MCF 10A (cell line): ENCODE measurements at regions of chr14 and their contacts with region 1.

Region 1: DNA sequence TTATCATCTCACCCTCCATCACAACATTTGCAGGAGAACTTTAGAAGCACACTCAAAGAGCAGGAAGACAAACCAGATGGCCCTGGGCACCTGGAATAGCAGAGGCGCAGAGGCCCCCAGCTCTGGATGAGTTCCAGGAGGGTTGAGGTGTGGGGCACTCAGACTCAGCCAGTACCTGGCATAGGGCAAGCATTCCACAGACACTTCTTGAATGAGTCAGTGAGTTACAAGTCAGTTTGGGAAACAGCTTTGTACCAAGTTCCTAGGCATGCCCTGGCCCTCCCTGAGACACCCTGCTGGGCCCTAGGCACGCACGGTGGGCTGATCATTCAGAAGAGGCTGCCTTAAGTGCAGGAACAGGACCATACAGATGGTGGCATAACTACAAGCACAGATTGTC is 54.3 kb downstream of the MAP3K9 start:
- DNase-seq: peak; percentile 94
- H3K4me3 Mint-ChIP-seq: no peak overlapping the region
- H3K27ac Mint-ChIP-seq: peak overlapping the region; percentile 89
- H3K4me1 Mint-ChIP-seq: peaks cover 24% of the 10 kb centered on the region
- H3K27me3 Mint-ChIP-seq: no peaks in the 10 kb centered on the region
- CTCF ChIP-seq: no peak

Region 2: GRCh38 chr14:70731447-70732239 is 23.3 kb before region 1 on chr14:
- CTCF ChIA-PET with region 1: no interaction called
- POLR2A ChIA-PET with region 1: no interaction called
- intact Hi-C with region 1: no loop called
- DNase-seq: no peak
- H3K4me3 Mint-ChIP-seq: no peak overlapping the region
- H3K27ac Mint-ChIP-seq: peak overlapping the region; percentile 63
- H3K4me1 Mint-ChIP-seq: no peaks in the 10 kb centered on the region
- H3K27me3 Mint-ChIP-seq: no peaks in the 10 kb centered on the region
- CTCF ChIP-seq: no peak

Region 3: GRCh38 chr14:70771781-70772212 is 16.8 kb after region 1 on chr14:
- CTCF ChIA-PET with region 1: interaction called, 3 read pairs
- POLR2A ChIA-PET with region 1: interaction called, 81 read pairs
- intact Hi-C with region 1: no loop called
- DNase-seq: peak; percentile 40
- H3K4me3 Mint-ChIP-seq: peak overlapping the region; percentile 20
- H3K27ac Mint-ChIP-seq: peak overlapping the region; percentile 76
- H3K4me1 Mint-ChIP-seq: peaks cover 32% of the 10 kb centered on the region
- H3K27me3 Mint-ChIP-seq: no peaks in the 10 kb centered on the region
- CTCF ChIP-seq: no peak

Region 4: DNA sequence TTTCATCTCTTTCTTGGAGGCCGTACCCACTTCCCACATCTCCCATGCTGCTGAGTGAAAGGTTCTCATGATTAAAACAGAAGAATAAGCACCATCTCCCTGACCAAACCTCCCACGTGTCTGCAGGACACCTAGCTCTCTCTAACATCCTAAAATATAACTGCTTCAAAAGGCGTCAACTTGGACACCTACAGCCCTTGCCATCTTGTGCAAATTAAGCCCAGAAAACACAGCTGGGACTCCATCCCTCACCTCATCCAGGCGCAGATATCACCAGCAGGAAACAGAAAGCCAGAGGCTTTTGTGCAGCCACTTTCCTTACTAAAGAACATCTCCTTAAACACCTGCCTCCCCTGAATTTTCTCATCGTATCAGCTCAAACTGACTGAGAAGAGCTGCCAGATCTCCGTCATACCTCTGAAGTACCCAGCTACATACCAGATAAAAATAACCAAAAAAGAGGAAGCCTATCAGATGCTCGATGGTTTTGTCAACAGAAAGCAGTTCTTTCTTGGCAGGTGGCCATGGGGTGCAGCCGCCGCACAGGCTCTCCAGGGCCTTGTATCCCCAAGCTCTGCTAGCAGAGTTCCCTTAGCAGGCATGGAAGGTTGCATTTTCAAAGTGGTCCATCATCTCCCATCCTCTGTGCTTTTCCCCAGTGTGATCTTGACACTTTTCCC is 25.5 kb after region 1 on chr14:
- CTCF ChIA-PET with region 1: no interaction called
- POLR2A ChIA-PET with region 1: interaction called, 23 read pairs
- intact Hi-C with region 1: no loop called
- DNase-seq: no peak
- H3K4me3 Mint-ChIP-seq: no peak overlapping the region
- H3K27ac Mint-ChIP-seq: peak overlapping the region; percentile 56
- H3K4me1 Mint-ChIP-seq: peaks cover 34% of the 10 kb centered on the region
- H3K27me3 Mint-ChIP-seq: no peaks in the 10 kb centered on the region
- CTCF ChIP-seq: no peak

Region 5: DNA sequence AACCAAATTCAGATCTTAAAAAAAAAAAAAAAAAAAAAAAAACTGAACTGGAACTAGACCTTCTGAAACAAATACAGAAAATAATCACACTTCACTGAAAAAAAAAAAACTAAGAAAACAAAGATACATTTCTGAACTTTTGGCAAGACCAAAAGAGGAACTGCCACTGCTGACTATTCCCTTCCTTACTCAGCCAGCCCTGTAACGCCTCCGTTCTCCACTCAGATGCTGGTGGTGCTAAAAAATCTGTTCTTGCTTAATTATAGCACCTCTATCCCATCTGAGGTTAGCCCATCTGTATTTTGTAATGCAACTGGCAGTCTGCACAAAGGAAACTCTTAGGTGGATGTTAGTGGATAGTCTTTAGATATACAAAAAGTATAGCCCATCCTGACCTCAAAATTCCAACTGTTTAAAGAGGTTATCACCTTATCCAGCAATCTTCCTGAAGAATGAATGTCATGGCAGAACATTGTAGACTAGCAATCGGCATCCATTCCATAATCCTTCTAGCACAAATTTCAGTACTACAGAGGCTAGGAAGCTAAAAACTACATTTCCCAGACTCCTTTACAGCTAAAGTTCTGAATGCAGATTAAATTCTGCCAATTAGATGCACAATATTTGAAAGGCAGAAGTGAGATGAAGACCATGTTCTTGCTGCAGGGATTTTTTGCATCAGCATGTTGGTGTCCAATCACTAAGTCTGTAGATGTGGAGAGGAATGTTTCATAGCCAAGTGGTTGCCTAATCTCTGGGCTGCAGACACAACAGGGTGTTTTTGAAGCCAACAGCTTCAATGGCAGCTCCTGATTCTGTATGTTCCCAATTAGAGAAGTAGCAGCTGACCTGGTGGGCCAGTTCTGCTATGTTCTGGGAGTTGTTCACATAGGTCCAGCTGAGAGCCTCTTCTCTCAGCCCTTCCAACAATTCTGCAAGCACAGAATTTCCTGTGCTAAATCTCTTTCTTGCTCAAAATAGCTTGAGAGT is 48.6 kb after region 1 on chr14:
- CTCF ChIA-PET with region 1: interaction called, 5 read pairs
- POLR2A ChIA-PET with region 1: interaction called, 69 read pairs
- intact Hi-C with region 1: no loop called
- DNase-seq: no peak
- H3K4me3 Mint-ChIP-seq: no peak overlapping the region
- H3K27ac Mint-ChIP-seq: no peak overlapping the region
- H3K4me1 Mint-ChIP-seq: peaks cover 6% of the 10 kb centered on the region
- H3K27me3 Mint-ChIP-seq: no peaks in the 10 kb centered on the region
- CTCF ChIP-seq: no peak

Region 6: DNA sequence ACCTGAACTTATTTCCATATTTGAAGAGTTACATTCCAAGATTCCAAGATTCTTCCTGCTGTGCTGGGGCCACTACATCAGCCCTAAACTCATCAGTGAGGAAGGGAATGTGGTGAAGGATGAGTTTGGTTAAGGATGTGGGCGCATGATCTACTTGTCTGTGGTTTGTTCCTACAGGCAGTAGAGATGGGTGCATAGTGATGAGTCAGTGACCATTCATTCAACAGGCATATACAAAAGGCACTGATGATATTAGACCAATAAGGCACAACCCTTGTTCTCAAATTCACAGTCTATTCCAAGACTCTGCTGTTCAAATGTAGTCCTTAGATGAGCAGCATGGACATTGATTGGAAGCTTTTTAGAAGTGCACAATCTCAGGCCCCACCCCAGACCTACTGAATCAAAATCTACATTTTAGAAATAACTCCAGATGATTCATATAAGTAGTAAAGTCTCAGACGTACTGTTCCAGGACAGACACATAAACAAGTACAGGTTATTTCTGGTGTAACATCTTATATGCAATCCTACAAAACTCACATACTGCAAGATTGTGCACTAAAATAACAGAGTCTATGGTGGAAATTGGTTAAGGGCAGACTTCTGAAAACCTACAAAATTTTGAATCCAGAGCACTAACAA is 102.0 kb after region 1 on chr14:
- CTCF ChIA-PET with region 1: no interaction called
- POLR2A ChIA-PET with region 1: no interaction called
- intact Hi-C with region 1: no loop called
- DNase-seq: peak; percentile 40
- H3K4me3 Mint-ChIP-seq: no peak overlapping the region
- H3K27ac Mint-ChIP-seq: peak overlapping the region; percentile 24
- H3K4me1 Mint-ChIP-seq: peaks cover 12% of the 10 kb centered on the region
- H3K27me3 Mint-ChIP-seq: no peaks in the 10 kb centered on the region
- CTCF ChIP-seq: no peak

Region 7: GRCh38 chr14:70897464-70897863 is 142.5 kb after region 1 on chr14:
- CTCF ChIA-PET with region 1: no interaction called
- POLR2A ChIA-PET with region 1: no interaction called
- intact Hi-C with region 1: no loop called
- DNase-seq: no peak
- H3K4me3 Mint-ChIP-seq: no peak overlapping the region
- H3K27ac Mint-ChIP-seq: peak overlapping the region; percentile 25
- H3K4me1 Mint-ChIP-seq: peaks cover 26% of the 10 kb centered on the region
- H3K27me3 Mint-ChIP-seq: no peaks in the 10 kb centered on the region
- CTCF ChIP-seq: no peak

Region 8: GRCh38 chr14:71050204-71050823 is 295.3 kb after region 1 on chr14:
- CTCF ChIA-PET with region 1: no interaction called
- POLR2A ChIA-PET with region 1: no interaction called
- intact Hi-C with region 1: no loop called
- DNase-seq: peak; percentile 20
- H3K4me3 Mint-ChIP-seq: no peak overlapping the region
- H3K27ac Mint-ChIP-seq: no peak overlapping the region
- H3K4me1 Mint-ChIP-seq: no peaks in the 10 kb centered on the region
- H3K27me3 Mint-ChIP-seq: no peaks in the 10 kb centered on the region
- CTCF ChIP-seq: peak; percentile 22